ENCODE measurements at regions of chr21 and their contacts with region 1.

Region 1: DNA sequence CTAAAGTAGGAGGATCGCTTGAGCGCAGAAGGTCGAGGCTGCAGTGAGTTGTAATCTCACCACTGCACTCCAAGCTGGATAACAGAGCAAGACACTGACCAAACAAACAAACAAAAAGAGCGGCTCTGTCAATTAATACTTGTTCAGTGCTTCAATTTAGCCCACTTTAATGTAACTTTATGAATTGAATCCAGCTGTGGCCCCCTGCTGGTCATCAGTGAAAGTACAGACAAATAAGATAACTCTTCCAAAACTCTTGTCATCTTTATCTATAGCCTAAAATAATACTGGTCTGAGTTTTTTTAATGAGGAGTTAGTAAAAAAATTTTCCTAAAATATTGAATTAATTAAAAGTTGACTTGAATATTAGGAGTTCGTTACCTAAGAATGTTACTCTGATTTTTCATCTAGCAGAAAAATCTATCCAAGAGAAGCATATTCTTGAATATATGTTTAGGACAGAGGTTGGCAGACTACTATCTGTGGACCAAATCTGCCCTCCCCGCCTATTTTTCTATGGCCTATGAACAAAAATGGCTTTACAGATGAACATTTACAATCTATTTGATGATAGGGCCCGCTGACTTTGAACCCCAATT is 26.1 kb downstream of the ATP5PF start:
- DNase-seq: peak; percentile 65
- ATAC-seq: peak; percentile 49
- H3K4me3 ChIP-seq: no peak overlapping the region
- H3K27ac ChIP-seq: no peak overlapping the region
- H3K4me1 ChIP-seq: no peaks in the 10 kb centered on the region
- H3K27me3 ChIP-seq: no peaks in the 10 kb centered on the region
- CTCF ChIP-seq: peak; percentile 88

Region 2: DNA sequence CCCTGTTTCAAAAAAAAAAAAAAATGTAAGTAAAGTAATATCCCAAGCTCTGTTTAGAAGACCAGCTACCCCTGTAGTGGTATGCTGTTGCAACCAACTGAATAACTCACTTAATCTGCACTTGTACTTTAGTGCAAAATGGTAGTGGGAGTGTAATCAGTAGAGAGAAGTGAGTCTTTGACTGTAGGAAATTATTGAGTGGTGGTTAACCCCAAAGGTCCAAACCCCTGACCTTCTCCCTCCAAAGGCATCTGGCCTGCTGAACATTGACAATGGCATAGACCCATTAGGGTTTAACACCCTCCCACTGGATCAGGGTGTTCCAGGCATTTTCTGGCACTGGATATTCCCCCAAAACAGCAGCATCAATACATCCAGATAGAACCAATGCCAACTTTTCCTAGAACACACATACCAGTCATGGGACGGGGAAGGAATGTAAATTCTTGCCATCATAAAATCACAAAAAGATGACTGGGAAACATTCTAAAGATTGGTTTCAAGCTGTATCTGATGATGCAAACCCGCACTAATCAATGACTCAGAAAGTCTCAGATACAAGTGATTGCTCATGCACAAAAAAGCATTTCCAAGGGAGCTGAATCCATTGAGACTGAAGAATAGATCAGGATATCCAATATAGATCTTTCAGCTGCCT is 211.6 kb before region 1 on chr21:
- CTCF ChIA-PET with region 1: no interaction called
- POLR2A ChIA-PET with region 1: interaction called, 11 read pairs
- intact Hi-C with region 1: no loop called
- DNase-seq: no peak
- ATAC-seq: no peak
- H3K4me3 ChIP-seq: no peak overlapping the region
- H3K27ac ChIP-seq: no peak overlapping the region
- H3K4me1 ChIP-seq: no peaks in the 10 kb centered on the region
- H3K27me3 ChIP-seq: no peaks in the 10 kb centered on the region
- CTCF ChIP-seq: no peak